Right cardiac atrium (tissue), 5 donors: ENCODE measurements at regions of chr9 and their contacts with region 1.

Region 1: GRCh38 chr9:91775011-91775707 is 174.9 kb downstream of the ROR2 start:
- DNase-seq: peak; percentile 61 to 80 (median 75)
- ATAC-seq: peak; percentile 46 to 59
- H3K4me3 ChIP-seq: no peak overlapping the region
- H3K27ac ChIP-seq: no peak overlapping the region
- H3K4me1 ChIP-seq: peaks cover 3% of the 10 kb centered on the region
- H3K27me3 ChIP-seq: no peaks in the 10 kb centered on the region

Region 2: GRCh38 chr9:91884696-91885687 is 109.8 kb after region 1 on chr9:
- intact Hi-C with region 1: no loop called
- DNase-seq: no peak
- ATAC-seq: no peak
- H3K4me3 ChIP-seq: no peak overlapping the region
- H3K27ac ChIP-seq: no peak overlapping the region
- H3K4me1 ChIP-seq: no peaks in the 10 kb centered on the region
- H3K27me3 ChIP-seq: no peaks in the 10 kb centered on the region

Region 3: GRCh38 chr9:91949946-91950664 is 174.9 kb after region 1 on chr9 and contains the start of gene ROR2:
- intact Hi-C with region 1: loop called (anchors 5 to 10 kb)
- DNase-seq: peak; percentile 65 to 93 (median 89)
- ATAC-seq: peak; percentile 83 to 88
- H3K4me3 ChIP-seq: peak within 1 kb of the TSS; percentile 75
- H3K27ac ChIP-seq: peak within 1 kb of the TSS; percentile 39
- H3K4me1 ChIP-seq: peaks cover 2% of the 10 kb centered on the region
- H3K27me3 ChIP-seq: no peaks in the 10 kb centered on the region
- total RNA-seq, gene ROR2: 33.7 to 38.9 (median 36.0) TPM